Transverse colon (tissue), 4 donors: ENCODE measurements at regions of chr18 and their contacts with region 1.

Region 1: DNA sequence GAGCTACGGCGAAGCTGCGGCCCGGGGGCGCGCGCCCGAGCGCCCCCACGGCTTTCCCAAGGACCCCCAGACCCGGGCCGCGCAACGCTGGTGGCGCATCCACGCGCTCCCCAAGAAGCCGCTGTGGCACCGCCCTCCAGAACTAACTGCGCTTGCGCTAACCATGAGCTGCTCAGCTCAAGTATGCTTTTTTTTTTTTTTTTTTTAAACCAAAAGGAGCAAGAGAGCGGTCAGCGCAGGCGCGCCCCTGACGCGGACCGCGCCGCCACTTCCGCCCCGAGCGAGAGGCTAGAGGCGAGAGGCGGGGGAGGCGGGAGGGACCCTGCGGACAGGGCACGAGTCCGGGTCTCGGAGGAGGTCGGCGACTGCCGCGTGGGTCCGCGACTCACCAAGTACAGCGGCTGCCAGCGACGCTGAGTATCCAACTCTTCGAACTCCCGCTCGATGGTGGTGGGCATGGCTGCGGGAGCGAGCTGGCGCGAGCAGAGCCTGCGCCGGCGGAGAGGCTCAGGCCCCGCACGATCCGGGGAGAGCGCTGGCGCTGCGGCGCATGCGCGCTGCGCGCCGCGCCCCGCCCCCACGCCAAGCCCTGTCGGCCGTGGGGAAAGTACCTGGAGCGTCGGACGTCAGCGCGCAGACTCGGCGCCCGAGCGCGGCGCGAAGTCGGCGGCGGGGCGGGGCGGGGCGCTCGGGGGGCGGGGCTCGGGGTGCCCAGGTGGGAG is at the start of gene PTPN2:
- DNase-seq: peak; percentile 95
- H3K4me3 ChIP-seq: peak within 1 kb of the TSS; percentile 73 to 94 (median 88)
- H3K27ac ChIP-seq: peak within 1 kb of the TSS; percentile 97 to 100 (median 99)
- H3K4me1 ChIP-seq: peaks cover 0 to 41% (median 17%) of the 10 kb centered on the region in 4 donors
- H3K27me3 ChIP-seq: no peaks in the 10 kb centered on the region
- CTCF ChIP-seq: no peak
- EP300 ChIP-seq: no peak
- POLR2A ChIP-seq: peak; percentile 96
- total RNA-seq, gene PTPN2: 10.5 to 65.7 (median 46.1) TPM

Region 2: GRCh38 chr18:12838178-12838634 is 45.6 kb before region 1 on chr18:
- in situ Hi-C with region 1: loop called in 1 of 4 experiments (anchors 10 kb)
- intact Hi-C with region 1: no loop called
- DNase-seq: peak; percentile 81
- H3K4me3 ChIP-seq: peak overlapping the region in 1 of 4 donors; percentile 21
- H3K27ac ChIP-seq: peak overlapping the region; percentile 79 to 83 (median 80)
- H3K4me1 ChIP-seq: peaks cover 4 to 41% (median 15%) of the 10 kb centered on the region in 4 donors
- H3K27me3 ChIP-seq: no peaks in the 10 kb centered on the region
- CTCF ChIP-seq: no peak
- EP300 ChIP-seq: no peak
- POLR2A ChIP-seq: peak; percentile 38

Region 3: DNA sequence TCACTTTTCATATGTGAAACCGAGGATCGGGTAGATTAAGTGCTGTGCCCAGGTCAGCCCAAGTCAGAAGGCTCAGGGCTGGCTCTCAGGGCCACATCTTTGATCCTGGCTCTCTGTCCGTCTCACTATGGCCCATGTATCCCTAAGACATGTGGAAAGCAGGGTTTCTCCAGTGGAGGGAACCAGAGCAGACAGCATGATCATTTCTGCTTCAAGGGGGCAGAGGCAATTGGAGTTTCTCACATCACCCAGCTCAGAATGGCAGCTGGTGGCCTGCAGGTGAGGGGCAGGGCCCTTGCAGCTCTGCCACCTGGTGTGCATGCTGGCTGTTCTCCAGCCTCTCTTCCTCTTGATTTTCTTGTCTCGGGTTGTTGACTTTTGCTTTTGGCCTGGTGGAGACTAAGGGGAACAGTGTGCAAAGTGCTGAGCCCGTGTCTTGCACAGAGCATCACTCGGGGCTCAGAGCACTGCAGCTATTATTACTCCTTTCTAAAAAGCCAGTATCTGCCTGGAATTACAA is 361.7 kb after region 1 on chr18:
- in situ Hi-C with region 1: no loop called
- intact Hi-C with region 1: no loop called
- DNase-seq: peak; percentile 25
- H3K4me3 ChIP-seq: no peak overlapping the region
- H3K27ac ChIP-seq: no peak overlapping the region
- H3K4me1 ChIP-seq: no peaks in the 10 kb centered on the region
- H3K27me3 ChIP-seq: no peaks in the 10 kb centered on the region
- CTCF ChIP-seq: peak in 1 of 5 experiments; percentile 13
- EP300 ChIP-seq: no peak
- POLR2A ChIP-seq: no peak

Region 4: GRCh38 chr18:13726232-13726971 is 842.6 kb after region 1 on chr18 and contains the starts of genes FAM210A and RNMT:
- in situ Hi-C with region 1: no loop called
- intact Hi-C with region 1: loop called (anchors 10 kb)
- DNase-seq: peak; percentile 97
- H3K4me3 ChIP-seq: peak within 1 kb of the TSS; percentile 41 to 92 (median 71)
- H3K27ac ChIP-seq: peak within 1 kb of the TSS; percentile 90 to 94 (median 92)
- H3K4me1 ChIP-seq: peaks cover 14 to 29% (median 22%) of the 10 kb centered on the region in 4 donors
- H3K27me3 ChIP-seq: no peaks in the 10 kb centered on the region
- CTCF ChIP-seq: peak in 1 of 5 experiments; percentile 35
- EP300 ChIP-seq: peak; percentile 13
- POLR2A ChIP-seq: peak; percentile 84
- total RNA-seq, gene FAM210A: 0.80 to 12.2 (median 10.2) TPM
- total RNA-seq, gene RNMT: 10.9 to 15.2 (median 13.0) TPM